PC-3 (cell line): ENCODE measurements at regions of chr13 and their contacts with region 1.

Region 1: GRCh38 chr13:29583073-29583785 is 12.3 kb downstream of the SLC7A1 start:
- DNase-seq: peak; percentile 62
- ATAC-seq: peak; percentile 96
- H3K4me3 ChIP-seq: no peak overlapping the region
- H3K27ac ChIP-seq: peak overlapping the region; percentile 5; the same call in 1 of the 2 replicates
- H3K4me1 ChIP-seq: peaks cover 14% of the 10 kb centered on the region
- H3K27me3 ChIP-seq: no peaks in the 10 kb centered on the region
- CTCF ChIP-seq: no peak

Region 2: DNA sequence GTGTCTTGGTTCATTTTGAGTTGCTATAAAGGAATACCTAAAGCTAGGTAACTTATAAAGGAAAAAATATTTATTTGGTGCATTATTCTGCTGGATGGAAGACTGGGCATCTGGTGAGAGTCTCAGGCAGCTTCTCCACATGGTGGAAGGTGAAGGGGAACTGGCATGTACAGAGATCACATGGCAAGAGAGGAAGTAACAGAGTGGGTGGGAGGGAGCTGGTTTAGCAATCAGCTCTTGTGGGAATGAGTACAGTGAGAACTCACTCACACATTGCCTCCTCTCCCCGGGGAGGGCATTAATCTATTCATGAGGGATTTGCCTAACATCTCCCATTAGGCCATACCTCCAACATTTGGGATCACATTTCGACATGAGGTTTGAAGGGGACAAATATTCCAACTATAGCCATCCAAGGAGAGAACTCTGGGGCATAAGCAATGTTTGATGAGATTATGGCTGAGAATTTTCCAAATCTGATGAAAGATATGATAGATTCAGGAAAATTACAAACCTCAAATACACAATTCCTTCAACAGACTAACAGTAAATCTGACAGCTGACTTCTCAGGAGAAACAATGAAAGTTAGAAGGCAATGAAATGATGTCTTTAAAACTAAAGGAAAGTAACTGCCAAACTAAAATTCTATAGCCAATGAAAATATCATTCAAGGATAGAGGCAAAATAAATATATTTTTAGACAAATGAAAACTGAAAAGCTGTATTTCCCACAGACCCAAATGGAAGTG is 710.6 kb before region 1 on chr13:
- CTCF ChIA-PET with region 1: no interaction called
- POLR2A ChIA-PET with region 1: no interaction called
- intact Hi-C with region 1: no loop called
- DNase-seq: no peak
- ATAC-seq: no peak
- H3K4me3 ChIP-seq: no peak overlapping the region
- H3K27ac ChIP-seq: no peak overlapping the region
- H3K4me1 ChIP-seq: no peaks in the 10 kb centered on the region
- H3K27me3 ChIP-seq: no peaks in the 10 kb centered on the region
- CTCF ChIP-seq: no peak

Region 3: DNA sequence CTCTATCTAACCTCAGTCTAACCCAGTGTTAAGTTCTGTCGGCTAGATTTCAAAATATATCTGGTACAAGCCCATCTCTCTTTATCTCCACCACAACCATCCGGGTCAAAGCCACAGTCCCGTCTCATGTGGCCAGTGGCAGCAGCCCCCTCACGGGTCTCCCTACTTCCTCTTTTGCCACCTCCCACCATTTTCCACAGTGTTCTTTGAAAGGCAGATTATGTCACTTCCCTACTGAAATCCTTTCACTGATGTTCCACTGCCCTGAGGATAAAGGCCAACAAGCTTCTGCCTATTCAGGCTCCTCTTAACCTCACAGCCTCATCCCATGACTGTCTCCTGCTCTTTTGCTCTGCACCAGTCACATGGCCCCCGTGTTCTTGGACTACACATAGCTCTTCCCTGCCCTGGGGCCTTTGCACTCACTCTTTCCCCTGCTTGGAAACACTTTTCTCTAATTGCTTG is 149.9 kb after region 1 on chr13:
- CTCF ChIA-PET with region 1: no interaction called
- POLR2A ChIA-PET with region 1: interaction called, 24 read pairs
- intact Hi-C with region 1: no loop called
- DNase-seq: no peak
- ATAC-seq: no peak
- H3K4me3 ChIP-seq: no peak overlapping the region
- H3K27ac ChIP-seq: no peak overlapping the region
- H3K4me1 ChIP-seq: no peaks in the 10 kb centered on the region
- H3K27me3 ChIP-seq: peaks cover 48% of the 10 kb centered on the region
- CTCF ChIP-seq: no peak